Common myeloid progenitor, CD34-positive (primary cell): ENCODE measurements at regions of chr1 and their contacts with region 1.

Region 1: GRCh38 chr1:157948312-157949073 is 45.0 kb upstream of the KIRREL1 start:
- DNase-seq: peak; percentile 68 to 83 (median 80)
- H3K4me3 ChIP-seq: no peak overlapping the region
- H3K27ac ChIP-seq: no peak overlapping the region
- H3K4me1 ChIP-seq: peaks cover 2 to 11% (median 6%) of the 10 kb centered on the region in 4 experiments
- H3K27me3 ChIP-seq: no peaks in the 10 kb centered on the region

Region 2: GRCh38 chr1:157878059-157878458 is 70.4 kb before region 1 on chr1:
- CTCF ChIA-PET with region 1: interaction called, 18 read pairs
- POLR2A ChIA-PET with region 1: no interaction called
- DNase-seq: peak; percentile 40 to 61 (median 57)
- H3K4me3 ChIP-seq: no peak overlapping the region
- H3K27ac ChIP-seq: no peak overlapping the region
- H3K4me1 ChIP-seq: peaks cover 0 to 7% (median 6%) of the 10 kb centered on the region in 4 experiments
- H3K27me3 ChIP-seq: no peaks in the 10 kb centered on the region

Region 3: GRCh38 chr1:157937744-157938143 is 10.7 kb before region 1 on chr1:
- CTCF ChIA-PET with region 1: interaction called, 27 read pairs
- POLR2A ChIA-PET with region 1: no interaction called
- DNase-seq: peak in 2 of 3 donors; percentile 13 to 22
- H3K4me3 ChIP-seq: no peak overlapping the region
- H3K27ac ChIP-seq: no peak overlapping the region
- H3K4me1 ChIP-seq: no peaks in the 10 kb centered on the region
- H3K27me3 ChIP-seq: no peaks in the 10 kb centered on the region

Region 4: DNA sequence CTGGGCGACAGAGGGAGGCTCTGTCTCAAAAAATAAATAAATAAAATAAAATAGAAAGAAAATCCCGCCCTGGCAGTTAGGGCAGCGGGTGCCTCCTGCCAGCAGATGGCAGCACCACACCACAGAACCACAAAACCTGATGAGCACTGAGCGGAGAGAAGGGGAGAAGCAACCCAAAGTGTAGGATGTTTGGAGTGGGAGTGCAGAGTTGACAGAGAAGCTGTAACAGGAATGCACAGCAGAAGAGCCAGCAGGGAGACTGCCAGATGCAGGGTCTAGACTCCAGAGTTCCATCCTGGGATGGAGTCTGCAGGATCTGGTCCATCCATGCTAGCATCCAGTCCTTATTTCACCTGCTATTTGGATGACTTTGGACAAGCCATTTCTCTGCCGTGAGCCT is 15.2 kb after region 1 on chr1:
- CTCF ChIA-PET with region 1: interaction called, 12 read pairs
- POLR2A ChIA-PET with region 1: no interaction called
- DNase-seq: peak; percentile 50 to 76 (median 64)
- H3K4me3 ChIP-seq: no peak overlapping the region
- H3K27ac ChIP-seq: no peak overlapping the region
- H3K4me1 ChIP-seq: peaks cover 0 to 5% (median 2%) of the 10 kb centered on the region in 4 experiments
- H3K27me3 ChIP-seq: peaks cover 0 to 3% (median 0%) of the 10 kb centered on the region in 5 experiments